ENCODE measurements at regions of chr9 and their contacts with region 1.

Region 1: DNA sequence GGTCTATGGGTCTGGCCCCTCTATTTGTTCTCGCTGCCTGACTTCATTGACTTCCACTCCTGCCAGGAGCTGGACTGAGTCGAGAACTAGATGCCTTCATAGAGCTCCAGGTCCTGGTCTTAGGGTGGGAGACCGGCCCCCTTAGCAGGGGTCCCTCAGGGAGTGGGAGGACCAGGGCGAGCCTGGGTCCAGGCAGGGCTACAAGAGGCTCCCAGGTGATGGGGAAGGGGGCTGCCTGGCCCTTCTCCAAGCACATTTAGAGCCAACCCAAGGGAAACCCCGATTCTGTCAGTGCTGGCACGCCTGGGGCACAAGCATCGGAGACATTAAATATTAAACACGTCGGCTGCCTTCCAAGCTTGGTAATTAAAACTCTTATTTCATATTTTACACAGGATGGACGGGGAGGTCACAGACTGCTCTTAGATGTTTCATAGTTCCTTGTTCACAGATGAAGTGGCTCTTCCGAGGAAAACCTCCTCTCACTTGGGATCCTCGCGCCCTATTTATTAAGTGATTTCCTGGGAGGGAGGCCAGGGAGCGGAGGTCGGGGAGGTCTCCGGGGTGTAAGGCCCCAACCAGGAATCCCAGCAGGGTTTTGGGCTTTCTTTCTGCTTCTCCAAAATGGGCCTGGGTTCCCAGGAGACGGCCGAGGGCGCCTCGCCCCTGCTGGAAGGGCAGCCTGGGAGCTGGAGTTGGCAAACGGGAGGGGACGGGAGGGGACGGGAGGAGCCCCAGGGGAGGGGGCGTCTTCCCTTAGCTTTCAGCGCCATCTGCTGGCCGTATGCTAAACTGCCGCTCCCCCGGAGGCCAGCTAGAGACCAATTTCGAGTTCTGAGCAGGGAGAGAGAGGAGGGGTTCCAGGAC is 23.4 kb upstream of the ZBTB43 start:
- DNase-seq: peak; percentile 88
- ATAC-seq: peak; percentile 93 to 96
- H3K4me3 ChIP-seq: peak overlapping the region; percentile 3
- H3K27ac ChIP-seq: no peak overlapping the region
- H3K4me1 ChIP-seq: no peaks in the 10 kb centered on the region
- H3K27me3 ChIP-seq: peaks cover 39% of the 10 kb centered on the region
- CTCF ChIP-seq: peak; percentile 98

Region 2: GRCh38 chr9:126704873-126705766 is 76.3 kb before region 1 on chr9:
- intact Hi-C with region 1: loop called (anchors 5 kb)
- DNase-seq: peak; percentile 83
- ATAC-seq: peak; percentile 86 to 89
- H3K4me3 ChIP-seq: peak overlapping the region; percentile 30
- H3K27ac ChIP-seq: no peak overlapping the region
- H3K4me1 ChIP-seq: peaks cover 14% of the 10 kb centered on the region
- H3K27me3 ChIP-seq: peaks cover 51% of the 10 kb centered on the region
- CTCF ChIP-seq: peak; percentile 88